CD4-positive, alpha-beta T cell (primary cell): ENCODE measurements at regions of chr5 and their contacts with region 1.

Region 1: GRCh38 chr5:143403593-143404415 is at the start of gene NR3C1:
- DNase-seq: peak; percentile 79 to 96 (median 87)
- ATAC-seq: peak; percentile 68
- H3K4me3 ChIP-seq: peak within 1 kb of the TSS; percentile 77
- H3K4me3 Mint-ChIP-seq: peak within 1 kb of the TSS; percentile 96
- H3K27ac ChIP-seq: peak within 1 kb of the TSS; percentile 88 to 98
- H3K27ac Mint-ChIP-seq: peak within 1 kb of the TSS; percentile 98
- H3K4me1 ChIP-seq: peaks cover 38% of the 10 kb centered on the region
- H3K4me1 Mint-ChIP-seq: peaks cover 44% of the 10 kb centered on the region
- H3K27me3 ChIP-seq: no peaks in the 10 kb centered on the region
- H3K27me3 Mint-ChIP-seq: no peaks in the 10 kb centered on the region
- CTCF ChIP-seq: no peak
- total RNA-seq, gene NR3C1: 168 to 191 TPM

Region 2: GRCh38 chr5:142922223-142922952 is 481.4 kb before region 1 on chr5:
- CTCF ChIA-PET with region 1: no interaction called
- POLR2A ChIA-PET with region 1: interaction called, 5 read pairs
- intact Hi-C with region 1: loop called in 1 of 2 experiments (anchors 2 kb)
- DNase-seq: peak in 3 of 14 experiments; percentile 49 to 61 (median 50)
- ATAC-seq: no peak
- H3K4me3 ChIP-seq: no peak overlapping the region
- H3K4me3 Mint-ChIP-seq: no peak overlapping the region
- H3K27ac ChIP-seq: no peak overlapping the region
- H3K27ac Mint-ChIP-seq: no peak overlapping the region
- H3K4me1 ChIP-seq: no peaks in the 10 kb centered on the region
- H3K4me1 Mint-ChIP-seq: peaks cover 22% of the 10 kb centered on the region
- H3K27me3 ChIP-seq: no peaks in the 10 kb centered on the region
- H3K27me3 Mint-ChIP-seq: no peaks in the 10 kb centered on the region
- CTCF ChIP-seq: peak; percentile 50

Region 3: DNA sequence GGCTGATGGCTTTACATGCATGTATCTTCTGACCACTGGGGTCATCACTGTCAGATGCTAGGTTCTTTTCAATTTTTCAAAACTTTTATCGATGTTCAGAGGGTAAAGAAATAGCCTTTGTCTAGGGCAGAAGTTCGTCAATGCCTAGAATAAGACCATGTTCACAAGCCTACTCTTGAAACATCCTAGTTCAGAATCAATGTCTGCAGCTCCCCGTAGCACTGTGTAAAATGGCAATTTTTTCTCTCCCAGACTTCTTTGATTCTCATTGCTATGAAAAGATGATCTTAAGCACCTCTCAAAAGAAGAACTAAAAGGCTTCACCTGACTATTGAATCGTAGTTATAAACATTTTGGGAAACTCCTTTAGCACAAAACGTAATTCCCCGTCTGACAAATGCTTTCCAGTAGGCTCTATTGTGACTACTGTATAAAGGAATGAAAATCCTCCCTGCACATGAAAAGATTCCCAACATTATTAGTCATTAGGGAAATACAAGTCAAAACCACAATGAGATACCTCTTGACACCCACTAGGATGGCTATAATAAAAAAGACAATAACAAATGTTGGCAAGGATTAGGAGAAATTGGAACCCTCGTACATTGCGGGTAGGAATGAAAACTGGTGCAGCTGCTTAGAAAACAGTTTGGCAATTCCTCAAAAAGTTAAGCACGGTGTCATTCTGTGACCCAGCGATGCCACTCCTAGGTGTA is 370.1 kb before region 1 on chr5:
- CTCF ChIA-PET with region 1: no interaction called
- POLR2A ChIA-PET with region 1: interaction called, 11 read pairs
- intact Hi-C with region 1: no loop called
- DNase-seq: no peak
- ATAC-seq: no peak
- H3K4me3 ChIP-seq: no peak overlapping the region
- H3K4me3 Mint-ChIP-seq: no peak overlapping the region
- H3K27ac ChIP-seq: no peak overlapping the region
- H3K27ac Mint-ChIP-seq: no peak overlapping the region
- H3K4me1 ChIP-seq: peaks cover 25% of the 10 kb centered on the region
- H3K4me1 Mint-ChIP-seq: peaks cover 25% of the 10 kb centered on the region
- H3K27me3 ChIP-seq: no peaks in the 10 kb centered on the region
- H3K27me3 Mint-ChIP-seq: no peaks in the 10 kb centered on the region
- CTCF ChIP-seq: no peak

Region 4: GRCh38 chr5:143302341-143302740 is 101.5 kb before region 1 on chr5:
- CTCF ChIA-PET with region 1: no interaction called
- POLR2A ChIA-PET with region 1: no interaction called
- intact Hi-C with region 1: loop called in 1 of 2 experiments (anchors 5 kb)
- DNase-seq: no peak
- ATAC-seq: no peak
- H3K4me3 ChIP-seq: no peak overlapping the region
- H3K4me3 Mint-ChIP-seq: no peak overlapping the region
- H3K27ac ChIP-seq: no peak overlapping the region
- H3K27ac Mint-ChIP-seq: no peak overlapping the region
- H3K4me1 ChIP-seq: no peaks in the 10 kb centered on the region
- H3K4me1 Mint-ChIP-seq: peaks cover 42% of the 10 kb centered on the region
- H3K27me3 ChIP-seq: no peaks in the 10 kb centered on the region
- H3K27me3 Mint-ChIP-seq: no peaks in the 10 kb centered on the region
- CTCF ChIP-seq: no peak

Region 5: GRCh38 chr5:143413958-143414669 is 10.3 kb after region 1 on chr5:
- CTCF ChIA-PET with region 1: interaction called, 14 read pairs
- POLR2A ChIA-PET with region 1: interaction called, 21 read pairs
- intact Hi-C with region 1: no loop called
- DNase-seq: peak in 3 of 14 experiments; percentile 21 to 38 (median 22)
- ATAC-seq: no peak
- H3K4me3 ChIP-seq: no peak overlapping the region
- H3K4me3 Mint-ChIP-seq: peak overlapping the region; percentile 3
- H3K27ac ChIP-seq: no peak overlapping the region
- H3K27ac Mint-ChIP-seq: peak overlapping the region; percentile 64
- H3K4me1 ChIP-seq: peaks cover 11% of the 10 kb centered on the region
- H3K4me1 Mint-ChIP-seq: peaks cover 33% of the 10 kb centered on the region
- H3K27me3 ChIP-seq: no peaks in the 10 kb centered on the region
- H3K27me3 Mint-ChIP-seq: no peaks in the 10 kb centered on the region
- CTCF ChIP-seq: no peak

Region 6: DNA sequence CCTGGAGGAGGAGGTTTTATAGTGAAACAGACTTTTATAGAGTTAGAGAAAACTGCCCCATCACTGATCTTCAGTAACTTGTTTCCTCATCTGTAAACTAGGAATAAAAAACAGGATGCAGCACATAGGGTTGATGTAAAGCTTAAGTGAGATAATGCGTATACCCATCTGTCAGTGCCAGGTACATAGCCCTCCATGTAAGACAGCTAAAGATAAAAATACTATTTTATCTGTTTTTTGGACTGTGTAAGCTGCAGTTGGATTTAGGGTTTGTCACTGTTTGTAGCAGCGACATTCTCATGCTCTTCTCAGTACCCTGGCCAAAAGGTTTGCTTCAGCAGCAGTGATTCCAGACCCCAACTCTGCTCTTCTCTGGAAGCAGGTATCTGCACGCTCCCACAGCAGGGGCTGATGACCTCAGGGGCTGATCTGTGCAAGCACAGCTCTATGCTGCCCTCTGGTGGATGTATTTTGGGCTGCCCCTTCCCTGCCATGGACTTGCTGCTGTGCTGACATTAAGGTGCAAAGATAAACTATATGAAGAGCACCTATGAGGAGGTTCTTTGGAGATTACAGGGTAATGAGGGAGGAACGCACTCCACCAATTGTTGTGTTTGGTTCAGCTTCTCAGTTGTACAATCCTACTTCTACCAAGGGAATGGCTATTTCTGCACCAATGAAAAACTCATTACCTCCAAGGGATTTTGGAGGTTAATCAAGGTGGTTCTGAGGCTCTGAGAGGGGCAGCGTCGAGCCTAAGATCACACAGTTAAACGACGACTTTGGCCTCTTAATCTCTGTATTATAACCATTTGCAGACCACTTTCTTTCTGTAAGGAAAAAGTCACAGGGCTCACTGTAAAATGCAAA is 421.3 kb after region 1 on chr5:
- CTCF ChIA-PET with region 1: interaction called, 3 read pairs
- POLR2A ChIA-PET with region 1: interaction called, 7 read pairs
- intact Hi-C with region 1: loop called (anchors 2 kb)
- DNase-seq: peak; percentile 75 to 91 (median 82)
- ATAC-seq: peak; percentile 94
- H3K4me3 ChIP-seq: no peak overlapping the region
- H3K4me3 Mint-ChIP-seq: no peak overlapping the region
- H3K27ac ChIP-seq: no peak overlapping the region
- H3K27ac Mint-ChIP-seq: no peak overlapping the region
- H3K4me1 ChIP-seq: peaks cover 13% of the 10 kb centered on the region
- H3K4me1 Mint-ChIP-seq: peaks cover 17% of the 10 kb centered on the region
- H3K27me3 ChIP-seq: no peaks in the 10 kb centered on the region
- H3K27me3 Mint-ChIP-seq: peaks cover 4% of the 10 kb centered on the region
- CTCF ChIP-seq: peak; percentile 86